Activated T-helper 1 cell treated with anti-CD3 and anti-CD28 coated beads, Interleukin-12 subunit alpha, Interleukin-12 subunit beta, Interleukin-2, Interleukin-4 antibody, amounts not matched to agents 30 ng/mL and 10 ng/mL and 1 ng/mL, durations not matched to agents 14 hours and 24 hours and 36 hours (primary cell): ENCODE measurements at regions of chr7 and their contacts with region 1.

Region 1: GRCh38 chr7:28955718-28956619 is 2.2 kb downstream of the TRIL start:
- DNase-seq: no peak
- H3K4me3 Mint-ChIP-seq: no peak overlapping the region
- H3K27ac Mint-ChIP-seq: no peak overlapping the region
- H3K4me1 Mint-ChIP-seq: no peaks in the 10 kb centered on the region
- H3K27me3 Mint-ChIP-seq: peaks cover 53% of the 10 kb centered on the region

Region 2: DNA sequence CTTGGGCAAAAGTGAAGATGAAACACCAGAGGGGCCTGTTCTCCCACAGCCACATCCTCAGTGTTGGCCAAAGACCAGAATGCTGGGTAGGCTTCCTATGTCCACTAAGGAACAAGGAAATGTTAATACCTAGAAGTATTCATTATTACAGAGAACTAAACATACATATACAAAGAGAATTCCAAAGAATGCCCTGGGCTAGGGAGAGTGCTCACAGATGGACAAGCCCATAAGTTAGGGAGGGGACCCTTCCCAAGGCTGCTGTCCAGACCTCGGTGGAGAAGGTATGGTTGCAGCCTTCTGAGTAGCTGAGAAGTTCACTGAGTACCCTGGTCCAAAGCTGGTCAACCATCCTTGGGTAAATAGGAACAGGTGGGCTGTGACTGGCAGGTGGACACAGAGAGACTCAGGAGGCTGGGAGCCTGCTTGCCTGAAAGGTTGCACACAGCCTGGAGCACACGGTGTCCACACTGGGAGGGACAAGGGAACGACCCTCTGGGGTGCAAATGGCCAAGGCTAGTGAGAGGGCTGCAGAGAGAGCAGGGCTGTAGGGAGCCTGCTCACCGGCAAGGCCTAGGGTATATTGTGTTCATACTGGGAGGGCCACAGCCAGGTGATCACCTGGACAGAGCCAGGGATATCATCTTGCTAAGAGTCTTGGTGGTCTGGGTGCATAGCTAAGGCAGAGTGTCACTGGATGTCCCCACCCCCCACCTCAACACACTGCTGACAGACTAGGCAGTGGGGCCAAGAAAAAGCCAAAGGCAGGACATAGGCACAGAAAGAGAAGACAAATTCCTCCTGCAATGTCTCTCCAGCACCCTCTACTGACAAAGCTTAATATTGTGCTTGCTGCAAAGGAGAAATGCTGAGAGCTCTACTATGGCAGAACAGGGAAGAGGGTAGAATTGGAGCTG is 150.0 kb after region 1 on chr7:
- intact Hi-C with region 1: loop called (anchors 1 kb)
- DNase-seq: peak; percentile 8
- H3K4me3 Mint-ChIP-seq: no peak overlapping the region
- H3K27ac Mint-ChIP-seq: no peak overlapping the region
- H3K4me1 Mint-ChIP-seq: peaks cover 7% of the 10 kb centered on the region
- H3K27me3 Mint-ChIP-seq: peaks cover 15% of the 10 kb centered on the region

Region 3: DNA sequence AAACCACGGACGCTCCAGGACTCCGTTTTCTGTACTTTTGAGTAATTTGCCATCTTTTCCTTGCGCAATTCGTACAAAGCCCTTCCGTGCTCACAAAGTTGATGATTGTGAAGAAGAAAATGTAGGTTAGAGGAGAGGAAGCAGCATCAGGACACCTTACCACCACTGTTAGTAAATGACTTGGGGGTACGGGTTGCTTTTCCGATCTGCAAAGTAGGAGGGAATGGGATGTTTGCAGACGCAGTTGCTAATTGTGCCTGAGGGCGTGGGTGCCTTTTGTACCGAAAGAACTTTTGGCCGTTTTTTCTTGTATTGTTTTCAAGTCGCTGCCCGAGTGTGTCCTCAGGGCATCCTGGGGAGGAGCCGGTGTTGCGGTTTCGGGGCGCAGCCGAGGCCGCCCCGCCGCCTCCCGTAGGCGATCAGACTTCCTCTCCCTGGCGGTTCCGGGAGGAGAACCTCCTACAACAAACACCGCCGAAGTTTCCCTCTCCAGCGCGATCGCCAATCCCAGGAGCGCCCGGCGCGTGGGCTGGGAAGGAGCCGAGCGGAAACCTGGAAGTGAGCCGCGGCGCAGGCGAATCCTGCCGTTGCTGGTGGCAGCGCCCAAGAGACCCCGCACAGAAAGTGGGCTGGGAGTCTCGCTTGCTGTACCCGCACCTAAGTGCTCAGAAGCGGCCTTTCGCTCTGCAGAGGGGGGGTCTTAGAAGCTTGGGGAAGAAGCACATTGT is 608.7 kb after region 1 on chr7:
- intact Hi-C with region 1: loop called (anchors 5 kb)
- DNase-seq: no peak
- H3K4me3 Mint-ChIP-seq: peak overlapping the region; percentile 81
- H3K27ac Mint-ChIP-seq: peak overlapping the region; percentile 40
- H3K4me1 Mint-ChIP-seq: peaks cover 22% of the 10 kb centered on the region
- H3K27me3 Mint-ChIP-seq: peaks cover 65% of the 10 kb centered on the region